ENCODE measurements at regions of chr15 and their contacts with region 1.

Region 1: DNA sequence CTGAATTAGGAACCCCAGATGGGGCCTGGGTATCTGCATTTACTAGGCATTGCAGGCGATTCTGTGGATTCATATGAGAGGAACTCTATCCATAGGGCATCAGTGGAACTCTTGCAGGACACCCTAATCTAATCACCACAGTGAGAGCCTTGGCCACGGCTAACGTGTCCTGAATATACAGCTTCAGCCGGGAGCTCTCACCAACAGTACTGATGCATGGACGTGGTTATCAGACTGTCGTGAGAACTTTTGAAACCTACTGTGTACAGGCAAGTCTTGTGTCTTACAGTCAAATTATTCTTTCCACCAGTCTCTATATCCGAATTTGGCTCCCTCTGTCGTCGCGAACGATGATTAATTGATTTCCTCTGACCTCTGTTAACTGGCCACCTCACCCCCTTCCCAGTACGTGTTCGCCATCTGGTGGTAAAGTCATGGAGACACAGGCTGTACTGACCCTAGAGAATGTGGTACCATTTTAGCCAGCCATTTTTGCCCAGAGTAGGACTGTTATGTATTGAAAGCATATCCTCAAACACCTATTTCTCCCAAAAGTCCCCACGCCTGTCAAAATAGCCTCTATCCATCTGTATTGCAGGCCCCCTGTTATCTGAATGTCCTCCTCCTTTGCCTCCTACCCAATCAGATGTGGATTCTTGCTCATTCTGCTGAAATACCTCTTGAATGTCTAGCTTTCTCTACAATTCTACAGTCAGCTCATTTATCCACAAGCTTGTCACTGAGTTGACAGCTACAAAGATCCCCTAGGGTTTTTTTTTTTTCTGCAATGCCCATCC is 39.7 kb downstream of the GLDN start:
- DNase-seq: peak; percentile 78
- H3K4me3 ChIP-seq: peak overlapping the region in 1 of 2 experiments; percentile 33; a peak in 1 of 4 replicates
- H3K27ac ChIP-seq: no peak overlapping the region
- H3K4me1 ChIP-seq: peaks cover 0 to 5% of the 10 kb centered on the region in 2 experiments; a peak in 1 of 4 replicates
- H3K27me3 ChIP-seq: no peaks in the 10 kb centered on the region; the same call in 1 of the 2 replicates
- CTCF ChIP-seq: peak; percentile 85
- EP300 ChIP-seq: no peak
- RAD21 ChIP-seq: peak; percentile 99

Region 2: GRCh38 chr15:51218299-51218938 is 162.8 kb before region 1 on chr15:
- CTCF ChIA-PET with region 1: interaction called, 14 read pairs
- POLR2A ChIA-PET with region 1: no interaction called
- DNase-seq: no peak
- H3K4me3 ChIP-seq: no peak overlapping the region
- H3K27ac ChIP-seq: no peak overlapping the region
- H3K4me1 ChIP-seq: no peaks in the 10 kb centered on the region
- H3K27me3 ChIP-seq: peaks cover 9% of the 10 kb centered on the region; the same call in 1 of the 2 replicates
- CTCF ChIP-seq: no peak
- EP300 ChIP-seq: no peak
- RAD21 ChIP-seq: no peak

Region 3: GRCh38 chr15:51239748-51240465 is 141.3 kb before region 1 on chr15:
- CTCF ChIA-PET with region 1: interaction called, 24 read pairs
- POLR2A ChIA-PET with region 1: no interaction called
- DNase-seq: peak; percentile 27
- H3K4me3 ChIP-seq: no peak overlapping the region
- H3K27ac ChIP-seq: no peak overlapping the region
- H3K4me1 ChIP-seq: peaks cover 0 to 3% of the 10 kb centered on the region in 2 experiments; a peak in 2 of 4 replicates
- H3K27me3 ChIP-seq: peaks cover 5% of the 10 kb centered on the region; the same call in 1 of the 2 replicates
- CTCF ChIP-seq: no peak
- EP300 ChIP-seq: no peak
- RAD21 ChIP-seq: no peak

Region 4: GRCh38 chr15:51286791-51287190 is 94.4 kb before region 1 on chr15:
- CTCF ChIA-PET with region 1: interaction called, 77 read pairs
- POLR2A ChIA-PET with region 1: no interaction called
- DNase-seq: no peak
- H3K4me3 ChIP-seq: no peak overlapping the region
- H3K27ac ChIP-seq: no peak overlapping the region
- H3K4me1 ChIP-seq: no peaks in the 10 kb centered on the region; a peak in 1 of 4 replicates
- H3K27me3 ChIP-seq: peaks cover 7% of the 10 kb centered on the region; the same call in 1 of the 2 replicates
- CTCF ChIP-seq: 0 out of 2 replicates have a peak, but pooled peaks have one; percentile 7
- EP300 ChIP-seq: no peak
- RAD21 ChIP-seq: no peak

Region 5: GRCh38 chr15:51363383-51363782 is 17.8 kb before region 1 on chr15:
- CTCF ChIA-PET with region 1: interaction called, 14 read pairs
- POLR2A ChIA-PET with region 1: no interaction called
- DNase-seq: no peak
- H3K4me3 ChIP-seq: no peak overlapping the region
- H3K27ac ChIP-seq: no peak overlapping the region
- H3K4me1 ChIP-seq: peaks cover 0 to 3% of the 10 kb centered on the region in 2 experiments; a peak in 2 of 4 replicates
- H3K27me3 ChIP-seq: no peaks in the 10 kb centered on the region
- CTCF ChIP-seq: no peak
- EP300 ChIP-seq: no peak
- RAD21 ChIP-seq: no peak

Region 6: GRCh38 chr15:51401872-51402517 is 20.8 kb after region 1 on chr15:
- CTCF ChIA-PET with region 1: interaction called, 40 read pairs
- POLR2A ChIA-PET with region 1: no interaction called
- DNase-seq: peak; percentile 39
- H3K4me3 ChIP-seq: no peak overlapping the region
- H3K27ac ChIP-seq: no peak overlapping the region
- H3K4me1 ChIP-seq: no peaks in the 10 kb centered on the region
- H3K27me3 ChIP-seq: peaks cover 11% of the 10 kb centered on the region
- CTCF ChIP-seq: peak; percentile 58
- EP300 ChIP-seq: no peak
- RAD21 ChIP-seq: peak; percentile 54

Measured in SK-N-SH (cell line).